SK-N-SH (cell line): ENCODE measurements at regions of chr15 and their contacts with region 1.

Region 1: GRCh38 chr15:40941528-40942336 is 11.5 kb upstream of the CHAC1 start:
- DNase-seq: peak; percentile 97
- H3K4me3 ChIP-seq: peak overlapping the region; percentile 56 to 60
- H3K27ac ChIP-seq: peak overlapping the region; percentile 33 to 85; a peak in 3 of 4 replicates
- H3K4me1 ChIP-seq: peaks cover 7 to 26% of the 10 kb centered on the region in 2 experiments; a peak in 2 of 4 replicates
- H3K27me3 ChIP-seq: no peaks in the 10 kb centered on the region
- CTCF ChIP-seq: peak; percentile 49
- EP300 ChIP-seq: no peak
- RAD21 ChIP-seq: peak; percentile 50

Region 2: GRCh38 chr15:40893733-40894688 is 47.7 kb before region 1 on chr15 and contains the start of gene VPS18:
- CTCF ChIA-PET with region 1: interaction called, 675 read pairs
- POLR2A ChIA-PET with region 1: interaction called, 3 read pairs
- DNase-seq: peak; percentile 95
- H3K4me3 ChIP-seq: peak within 1 kb of the TSS; percentile 88 to 91
- H3K27ac ChIP-seq: peak within 1 kb of the TSS; percentile 51 to 85
- H3K4me1 ChIP-seq: peaks cover 0 to 14% of the 10 kb centered on the region in 2 experiments; a peak in 1 of 4 replicates
- H3K27me3 ChIP-seq: no peaks in the 10 kb centered on the region
- CTCF ChIP-seq: peak; percentile 73
- EP300 ChIP-seq: 0 out of 4 replicates have a peak, but pooled peaks of 1 of the 2 experiments have one; percentile 11
- RAD21 ChIP-seq: peak; percentile 85
- polyA plus RNA-seq, gene VPS18: 13.5 and 14.1 TPM in 2 replicates

Region 3: GRCh38 chr15:40923551-40923950 is 18.2 kb before region 1 on chr15:
- CTCF ChIA-PET with region 1: interaction called, 109 read pairs
- POLR2A ChIA-PET with region 1: interaction called, 5 read pairs
- DNase-seq: no peak
- H3K4me3 ChIP-seq: no peak overlapping the region
- H3K27ac ChIP-seq: no peak overlapping the region
- H3K4me1 ChIP-seq: peaks cover 3 to 16% of the 10 kb centered on the region in 2 experiments; a peak in 2 of 4 replicates
- H3K27me3 ChIP-seq: peaks cover 25% of the 10 kb centered on the region
- CTCF ChIP-seq: no peak
- EP300 ChIP-seq: no peak
- RAD21 ChIP-seq: no peak

Region 4: GRCh38 chr15:40952901-40953712 is 11.4 kb after region 1 on chr15 and contains the start of gene CHAC1:
- CTCF ChIA-PET with region 1: interaction called, 66 read pairs
- POLR2A ChIA-PET with region 1: interaction called, 47 read pairs
- DNase-seq: peak; percentile 100
- H3K4me3 ChIP-seq: peak within 1 kb of the TSS; percentile 76 to 90
- H3K27ac ChIP-seq: peak within 1 kb of the TSS; percentile 74 to 93
- H3K4me1 ChIP-seq: peaks cover 18 to 41% of the 10 kb centered on the region in 2 experiments; a peak in 3 of 4 replicates
- H3K27me3 ChIP-seq: no peaks in the 10 kb centered on the region
- CTCF ChIP-seq: no peak
- EP300 ChIP-seq: no peak
- RAD21 ChIP-seq: 0 out of 2 replicates have a peak, but pooled peaks have one; percentile 1
- polyA plus RNA-seq, gene CHAC1: 9.3 and 12.3 TPM in 2 replicates

Region 5: GRCh38 chr15:40974879-40975278 is 33.1 kb after region 1 on chr15:
- CTCF ChIA-PET with region 1: interaction called, 17 read pairs
- POLR2A ChIA-PET with region 1: no interaction called
- DNase-seq: no peak
- H3K4me3 ChIP-seq: no peak overlapping the region
- H3K27ac ChIP-seq: no peak overlapping the region
- H3K4me1 ChIP-seq: no peaks in the 10 kb centered on the region
- H3K27me3 ChIP-seq: no peaks in the 10 kb centered on the region
- CTCF ChIP-seq: no peak
- EP300 ChIP-seq: no peak
- RAD21 ChIP-seq: no peak

Region 6: GRCh38 chr15:41011055-41011815 is 69.5 kb after region 1 on chr15:
- CTCF ChIA-PET with region 1: interaction called, 17 read pairs
- POLR2A ChIA-PET with region 1: no interaction called
- DNase-seq: no peak
- H3K4me3 ChIP-seq: no peak overlapping the region
- H3K27ac ChIP-seq: peak overlapping the region in 1 of 2 experiments; percentile 14; a peak in 2 of 4 replicates
- H3K4me1 ChIP-seq: peaks cover 3 to 12% of the 10 kb centered on the region in 2 experiments
- H3K27me3 ChIP-seq: no peaks in the 10 kb centered on the region
- CTCF ChIP-seq: no peak
- EP300 ChIP-seq: no peak
- RAD21 ChIP-seq: no peak